Sciatic nerve (tissue), 2 donors: ENCODE measurements at regions of chr12 and their contacts with region 1.

Region 1: GRCh38 chr12:108570743-108571608 is 8.6 kb downstream of the ISCU start:
- DNase-seq: no peak
- ATAC-seq: peak; percentile 54

Region 2: DNA sequence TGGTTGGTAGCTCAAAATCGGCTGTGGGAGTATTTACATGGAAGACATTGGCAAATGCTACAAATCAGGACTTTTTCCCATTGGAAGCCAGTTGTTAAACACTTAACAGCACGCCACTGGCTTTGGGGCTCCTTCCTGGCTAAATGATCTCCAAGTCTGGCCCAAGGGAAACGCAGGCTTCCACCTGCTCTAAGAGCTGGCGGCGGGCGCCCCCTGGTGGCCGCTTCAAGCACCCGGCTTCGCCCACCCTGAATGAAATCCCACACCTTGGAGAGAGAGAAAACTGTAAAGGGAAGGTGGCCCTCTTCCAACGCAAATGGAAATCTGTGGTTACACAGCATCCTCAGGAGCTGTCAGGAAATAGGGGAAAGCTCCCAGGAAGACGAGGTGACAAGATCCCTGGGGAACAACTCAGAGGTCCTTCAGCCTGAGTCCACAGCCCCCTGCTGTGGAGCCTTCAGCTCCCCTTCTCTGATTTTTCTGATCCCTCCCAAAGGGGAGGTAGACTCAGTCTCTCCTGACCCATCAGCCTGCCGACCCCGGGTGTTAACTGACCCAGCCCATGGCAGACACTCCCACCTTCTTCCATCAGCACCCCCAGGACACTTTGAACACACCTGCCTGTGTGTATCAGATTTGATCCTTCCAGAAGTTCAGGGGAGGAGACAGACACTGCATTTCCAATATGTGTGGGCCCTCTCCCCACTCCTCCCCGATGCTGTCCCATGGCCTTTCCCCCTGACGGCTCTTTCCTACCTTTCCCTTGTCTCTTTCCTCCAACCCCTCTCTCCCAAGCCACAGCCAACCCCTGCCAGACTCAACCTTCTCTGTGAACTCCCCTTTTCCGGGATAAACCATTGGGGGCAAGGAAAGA is 47.3 kb after region 1 on chr12:
- intact Hi-C with region 1: loop called (anchors 5 kb)
- DNase-seq: peak; percentile 90
- ATAC-seq: peak; percentile 91

Region 3: DNA sequence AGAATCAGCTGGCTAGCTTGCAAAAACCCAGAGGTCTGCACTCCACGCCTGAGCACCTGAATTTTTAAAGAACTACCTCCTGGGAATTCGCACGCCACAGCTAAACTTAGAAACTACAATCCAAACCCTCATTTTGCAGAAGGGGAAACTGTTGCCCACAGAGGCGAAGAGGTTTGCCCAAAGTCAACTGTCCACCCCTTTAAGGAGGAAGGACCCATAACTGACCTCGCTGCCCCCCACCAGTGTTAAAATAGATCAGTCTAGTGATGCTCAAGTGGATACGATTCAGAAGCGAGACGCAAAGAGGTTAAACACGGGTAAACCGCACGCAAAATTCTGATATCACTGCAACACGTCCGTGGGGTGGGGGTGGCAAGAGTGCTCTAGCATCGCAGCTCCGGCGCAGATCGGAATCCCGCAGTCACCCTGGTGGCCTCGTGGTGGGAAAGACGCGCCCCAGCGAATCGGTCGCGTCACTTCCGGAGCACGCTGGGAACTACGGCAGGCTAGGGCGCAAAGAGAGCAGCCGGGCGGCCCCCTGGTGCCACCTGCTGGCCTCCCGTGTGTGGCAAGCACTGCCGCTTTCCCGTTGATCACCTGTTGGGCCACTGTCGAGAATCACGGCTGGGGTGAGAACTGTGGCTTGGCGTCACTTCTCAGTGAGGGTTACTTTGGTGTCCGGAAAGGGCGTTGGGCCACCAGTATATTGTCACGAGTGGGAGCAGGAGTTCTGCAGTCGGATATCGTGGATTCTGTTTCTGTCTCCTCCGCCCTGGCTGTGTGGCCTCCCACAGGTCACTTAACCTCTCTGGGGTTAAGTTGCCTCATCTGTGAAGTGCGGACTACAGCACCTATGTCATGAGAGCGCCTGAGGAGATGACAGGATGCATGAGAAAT is 522.3 kb after region 1 on chr12 and contains the start of gene ALKBH2:
- intact Hi-C with region 1: no loop called
- DNase-seq: peak; percentile 95
- ATAC-seq: peak; percentile 87
- total RNA-seq, gene ALKBH2: 12.6 TPM